A549 (cell line): ENCODE measurements at regions of chr5 and their contacts with region 1.

Region 1: DNA sequence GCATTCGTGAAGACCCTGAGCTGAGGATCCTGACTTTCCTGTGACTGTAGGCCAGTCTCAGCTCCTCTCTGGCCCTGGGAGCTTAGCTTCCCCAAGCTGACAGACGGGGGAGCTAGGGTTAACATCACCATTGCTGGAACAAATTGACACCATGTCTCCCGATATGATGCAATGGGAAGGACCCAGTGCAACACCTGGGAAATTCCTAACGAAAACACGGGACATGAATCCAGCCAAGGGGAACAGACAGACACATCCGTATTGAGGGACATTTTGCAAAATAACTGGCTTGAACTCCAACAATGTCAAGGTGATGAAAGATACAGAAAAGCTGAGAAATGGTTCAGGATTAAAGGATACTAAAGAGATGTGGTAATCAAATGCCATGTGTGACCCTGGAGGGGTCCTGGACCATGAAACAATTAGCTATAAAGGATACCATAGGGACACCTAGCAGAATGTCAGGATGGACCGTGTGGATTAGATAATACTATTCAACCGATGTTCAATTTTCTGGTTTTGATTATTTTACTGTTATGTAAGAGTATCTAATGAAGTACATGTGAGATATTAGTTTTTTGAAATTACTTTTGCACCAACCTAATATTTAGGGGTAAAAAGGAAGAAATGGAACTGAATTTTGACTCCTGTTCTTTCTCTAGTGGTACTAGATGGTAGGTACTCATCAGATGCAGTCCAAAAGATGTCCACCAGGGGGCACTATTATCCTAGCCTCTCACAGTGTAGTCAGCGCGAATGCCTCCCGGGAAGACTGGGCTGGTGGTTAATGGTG is 52.7 kb downstream of the NDST1 start:
- DNase-seq: peak; percentile 83 to 92
- ATAC-seq: peak; percentile 72 to 85
- H3K4me3 ChIP-seq: no peak overlapping the region
- H3K27ac ChIP-seq: peak overlapping the region; percentile 66 to 80
- H3K4me1 ChIP-seq: peaks cover 19% of the 10 kb centered on the region
- CTCF ChIP-seq: peak; percentile 93
- EP300 ChIP-seq: no peak
- POLR2A ChIP-seq: no peak
- RAD21 ChIP-seq: peak; percentile 94 to 95

Region 2: DNA sequence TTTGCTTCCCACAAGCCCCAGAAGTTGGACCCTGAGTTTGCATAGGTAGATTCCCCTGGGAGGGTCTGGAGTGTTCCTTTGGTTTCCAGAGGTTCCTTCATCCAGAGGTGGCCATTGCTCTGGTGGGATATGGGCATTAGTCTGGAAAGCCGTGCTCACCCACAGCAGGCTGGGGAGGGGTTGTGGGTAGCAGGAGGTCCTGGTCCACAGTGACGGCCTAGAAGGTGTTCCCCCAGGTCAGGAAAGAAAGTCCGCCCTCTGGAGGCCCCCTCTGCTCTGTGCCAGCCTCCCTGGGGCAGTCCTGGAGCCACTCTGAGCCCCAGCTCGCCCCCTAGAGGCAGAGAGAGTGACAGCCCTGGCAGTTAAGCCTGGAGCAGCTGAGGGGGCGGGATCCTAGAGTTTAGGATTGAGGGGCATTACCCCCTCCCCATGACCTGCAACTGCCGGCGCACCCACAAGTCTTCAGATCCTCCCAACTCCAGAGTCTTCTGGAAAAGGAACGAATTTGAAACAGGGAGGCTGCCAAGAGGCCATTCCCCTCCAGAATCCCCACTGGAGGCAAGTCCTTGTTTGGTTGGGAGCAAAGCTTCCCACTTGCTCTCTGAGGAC is 15.9 kb before region 1 on chr5:
- CTCF ChIA-PET with region 1: interaction called, 180 read pairs
- POLR2A ChIA-PET with region 1: interaction called, 3 read pairs
- DNase-seq: peak; percentile 68 to 96
- ATAC-seq: peak; percentile 88 to 94
- H3K4me3 ChIP-seq: no peak overlapping the region
- H3K27ac ChIP-seq: peak overlapping the region in 1 of 2 experiments; percentile 27; a peak in 2 of 6 replicates
- H3K4me1 ChIP-seq: peaks cover 25% of the 10 kb centered on the region
- CTCF ChIP-seq: peak; percentile 82
- EP300 ChIP-seq: no peak
- POLR2A ChIP-seq: no peak
- RAD21 ChIP-seq: peak; percentile 77 to 78

Region 3: DNA sequence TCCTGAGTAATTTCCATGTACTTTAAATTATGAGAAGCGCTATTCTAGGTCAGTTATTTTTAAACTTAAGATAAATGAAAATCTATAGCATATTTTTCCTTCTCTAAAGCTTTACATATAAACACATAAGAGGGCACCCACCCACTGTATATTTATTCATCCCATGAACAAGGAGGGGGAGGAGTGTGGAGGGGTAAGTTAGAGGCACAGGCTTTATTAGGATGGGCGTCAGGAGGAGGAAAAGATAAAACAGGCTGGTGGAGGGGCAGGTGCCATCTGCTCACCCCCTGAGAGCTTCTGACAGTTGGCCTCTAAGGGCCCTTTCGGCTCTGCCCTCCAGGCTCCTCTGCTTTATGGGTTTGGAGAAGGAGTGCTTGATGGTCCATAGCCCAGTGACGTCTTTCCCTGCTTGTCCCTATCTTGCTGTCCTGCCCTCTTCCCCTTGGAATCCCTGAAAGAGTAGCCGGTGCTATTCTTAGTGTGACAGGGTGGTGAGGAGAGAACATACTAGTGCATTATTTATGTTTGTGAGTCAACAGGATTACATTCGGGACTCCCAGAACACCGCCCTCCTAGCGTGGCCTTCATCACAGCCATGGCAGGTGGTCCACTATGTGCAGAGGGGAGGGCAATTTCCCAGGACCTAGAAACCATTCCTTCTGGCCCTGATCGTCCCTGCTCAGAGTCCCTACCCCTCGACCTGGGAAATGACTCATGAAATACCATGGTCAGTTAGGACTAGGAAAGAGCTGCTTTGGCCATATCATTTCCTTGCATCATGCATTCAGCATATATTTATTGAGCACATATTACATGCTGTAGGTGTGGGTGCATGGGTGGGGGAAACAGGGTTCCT is 71.9 kb after region 1 on chr5:
- CTCF ChIA-PET with region 1: interaction called, 92 read pairs
- POLR2A ChIA-PET with region 1: no interaction called
- DNase-seq: peak in 1 of 2 experiments; percentile 51
- ATAC-seq: peak; percentile 17 to 22
- H3K4me3 ChIP-seq: no peak overlapping the region
- H3K27ac ChIP-seq: peak overlapping the region; percentile 74 to 96
- H3K4me1 ChIP-seq: peaks cover 92% of the 10 kb centered on the region
- CTCF ChIP-seq: no peak
- EP300 ChIP-seq: no peak
- POLR2A ChIP-seq: no peak
- RAD21 ChIP-seq: no peak

Region 4: DNA sequence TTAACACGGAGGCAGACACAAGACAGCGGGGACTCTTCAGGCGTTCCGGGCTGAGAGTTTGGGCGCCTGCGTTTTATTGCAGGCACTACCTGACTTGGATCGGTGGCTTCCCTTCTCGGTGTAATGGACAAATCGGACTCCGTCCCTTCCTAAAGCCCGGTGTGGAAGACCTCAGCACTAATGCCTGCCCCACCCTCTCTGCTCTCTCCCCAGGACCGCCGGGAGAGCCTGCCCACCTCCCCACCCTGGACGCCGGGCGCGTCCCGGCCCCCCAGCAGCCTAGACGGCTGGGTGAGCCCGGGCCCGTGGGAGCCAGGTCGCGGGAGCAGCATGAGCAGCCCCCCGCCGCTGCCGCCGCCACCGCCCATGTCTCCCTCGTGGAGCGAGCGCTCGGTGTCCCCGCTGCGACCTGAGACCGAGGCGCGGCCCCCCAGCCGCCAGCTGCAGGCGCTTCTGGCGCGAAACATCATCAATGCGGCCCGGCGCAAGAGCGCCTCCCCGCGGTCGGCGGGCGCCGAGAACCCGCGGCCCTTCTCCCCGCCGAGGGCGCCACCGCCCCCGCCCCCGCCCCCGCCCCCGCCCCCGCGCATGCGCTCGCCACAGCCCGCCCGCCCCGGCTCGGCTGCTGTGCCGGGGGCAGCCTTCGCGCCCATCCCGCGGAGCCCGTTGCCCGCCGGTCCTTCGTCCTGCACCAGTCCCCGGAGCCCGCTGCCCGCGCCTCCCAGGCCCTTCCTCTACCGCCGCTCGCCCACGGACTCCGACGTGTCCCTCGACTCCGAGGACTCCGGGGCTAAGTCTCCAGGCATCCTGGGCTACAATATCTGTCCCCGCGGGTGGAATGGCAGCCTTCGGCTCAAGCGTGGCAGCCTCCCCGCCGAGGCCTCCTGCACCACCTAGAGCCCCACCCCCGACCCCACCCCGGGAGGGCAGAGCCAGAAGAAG is 95.9 kb after region 1 on chr5:
- CTCF ChIA-PET with region 1: interaction called, 128 read pairs
- POLR2A ChIA-PET with region 1: no interaction called
- DNase-seq: peak; percentile 60 to 81
- ATAC-seq: peak; percentile 48 to 66
- H3K4me3 ChIP-seq: peak overlapping the region; percentile 50
- H3K27ac ChIP-seq: peak overlapping the region; percentile 83 to 96
- H3K4me1 ChIP-seq: peaks cover 43% of the 10 kb centered on the region
- CTCF ChIP-seq: peak; percentile 90
- EP300 ChIP-seq: no peak
- POLR2A ChIP-seq: peak; percentile 50
- RAD21 ChIP-seq: peak; percentile 71 to 98

Region 5: GRCh38 chr5:150689120-150689519 is 128.5 kb after region 1 on chr5:
- CTCF ChIA-PET with region 1: interaction called, 11 read pairs
- POLR2A ChIA-PET with region 1: no interaction called
- DNase-seq: no peak
- ATAC-seq: peak in 1 of 2 experiments; percentile 33; a peak in 1 of 6 replicates
- H3K4me3 ChIP-seq: no peak overlapping the region
- H3K27ac ChIP-seq: no peak overlapping the region
- H3K4me1 ChIP-seq: no peaks in the 10 kb centered on the region
- CTCF ChIP-seq: no peak
- EP300 ChIP-seq: no peak
- POLR2A ChIP-seq: no peak
- RAD21 ChIP-seq: no peak

Region 6: GRCh38 chr5:150778517-150779396 is 218.2 kb after region 1 on chr5 and contains the start of gene SMIM3:
- CTCF ChIA-PET with region 1: interaction called, 34 read pairs
- POLR2A ChIA-PET with region 1: no interaction called
- DNase-seq: peak; percentile 55 to 58
- ATAC-seq: peak; percentile 91 to 94
- H3K4me3 ChIP-seq: peak within 1 kb of the TSS; percentile 81
- H3K27ac ChIP-seq: peak within 1 kb of the TSS; percentile 78 to 86
- H3K4me1 ChIP-seq: peaks cover 9% of the 10 kb centered on the region
- CTCF ChIP-seq: peak; percentile 54
- EP300 ChIP-seq: no peak
- POLR2A ChIP-seq: peak; percentile 33; the same call in 1 of the 2 replicates
- RAD21 ChIP-seq: peak; percentile 64 to 66
- polyA plus RNA-seq, gene SMIM3: 4.5 and 4.9 TPM in 2 replicates